ENCODE measurements at regions of chr11 and their contacts with region 1.

Region 1: DNA sequence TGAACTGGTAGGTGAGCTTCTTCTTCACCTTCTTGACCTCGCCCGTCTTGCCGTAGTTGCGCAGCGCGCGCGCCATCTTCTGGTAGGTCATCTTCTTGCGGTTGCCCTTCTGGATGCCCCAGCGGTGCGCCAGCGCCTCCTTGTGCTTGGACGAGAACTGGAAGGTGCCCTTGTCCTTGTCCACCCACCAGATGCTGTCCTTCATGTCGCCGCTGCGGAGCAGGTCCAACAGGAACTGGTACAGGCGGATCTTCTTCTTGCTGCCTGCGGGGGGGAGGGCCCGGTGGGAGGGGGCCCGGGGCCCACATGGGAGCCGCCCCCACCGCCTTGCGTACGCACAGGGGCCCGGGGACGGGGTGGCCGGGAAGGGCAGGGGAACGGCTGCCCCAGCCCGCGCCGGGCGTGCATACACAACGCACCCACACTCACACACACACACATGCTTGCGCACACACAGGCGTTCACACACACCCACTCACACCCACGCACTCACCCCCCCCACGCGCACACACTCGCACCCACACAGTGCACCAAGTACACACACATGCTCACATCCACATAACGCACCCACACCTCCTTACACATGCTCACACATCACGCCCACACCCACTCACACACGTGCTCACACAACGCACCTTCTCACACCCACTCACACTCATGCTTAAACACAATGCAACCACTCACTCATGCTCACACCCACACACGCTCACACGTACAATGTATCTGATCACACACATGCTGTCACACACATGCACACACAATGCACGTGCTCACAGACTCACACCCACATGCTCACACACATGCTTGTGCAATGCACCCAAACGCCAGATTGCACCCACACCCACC is 3.0 kb upstream of the MYBPC3 start:
- DNase-seq: peak; percentile 93
- H3K4me3 ChIP-seq: peak overlapping the region; percentile 28 to 65
- H3K27ac ChIP-seq: no peak overlapping the region
- H3K4me1 ChIP-seq: peaks cover 0 to 10% of the 10 kb centered on the region in 2 experiments; a peak in 1 of 4 replicates
- H3K27me3 ChIP-seq: no peaks in the 10 kb centered on the region
- CTCF ChIP-seq: peak; percentile 96
- EP300 ChIP-seq: no peak
- RAD21 ChIP-seq: peak; percentile 97

Region 2: GRCh38 chr11:46856605-46857343 is 498.7 kb before region 1 on chr11:
- CTCF ChIA-PET with region 1: no interaction called
- POLR2A ChIA-PET with region 1: no interaction called
- DNase-seq: no peak
- H3K4me3 ChIP-seq: no peak overlapping the region
- H3K27ac ChIP-seq: no peak overlapping the region
- H3K4me1 ChIP-seq: no peaks in the 10 kb centered on the region
- H3K27me3 ChIP-seq: no peaks in the 10 kb centered on the region
- CTCF ChIP-seq: no peak
- EP300 ChIP-seq: no peak
- RAD21 ChIP-seq: no peak

Region 3: DNA sequence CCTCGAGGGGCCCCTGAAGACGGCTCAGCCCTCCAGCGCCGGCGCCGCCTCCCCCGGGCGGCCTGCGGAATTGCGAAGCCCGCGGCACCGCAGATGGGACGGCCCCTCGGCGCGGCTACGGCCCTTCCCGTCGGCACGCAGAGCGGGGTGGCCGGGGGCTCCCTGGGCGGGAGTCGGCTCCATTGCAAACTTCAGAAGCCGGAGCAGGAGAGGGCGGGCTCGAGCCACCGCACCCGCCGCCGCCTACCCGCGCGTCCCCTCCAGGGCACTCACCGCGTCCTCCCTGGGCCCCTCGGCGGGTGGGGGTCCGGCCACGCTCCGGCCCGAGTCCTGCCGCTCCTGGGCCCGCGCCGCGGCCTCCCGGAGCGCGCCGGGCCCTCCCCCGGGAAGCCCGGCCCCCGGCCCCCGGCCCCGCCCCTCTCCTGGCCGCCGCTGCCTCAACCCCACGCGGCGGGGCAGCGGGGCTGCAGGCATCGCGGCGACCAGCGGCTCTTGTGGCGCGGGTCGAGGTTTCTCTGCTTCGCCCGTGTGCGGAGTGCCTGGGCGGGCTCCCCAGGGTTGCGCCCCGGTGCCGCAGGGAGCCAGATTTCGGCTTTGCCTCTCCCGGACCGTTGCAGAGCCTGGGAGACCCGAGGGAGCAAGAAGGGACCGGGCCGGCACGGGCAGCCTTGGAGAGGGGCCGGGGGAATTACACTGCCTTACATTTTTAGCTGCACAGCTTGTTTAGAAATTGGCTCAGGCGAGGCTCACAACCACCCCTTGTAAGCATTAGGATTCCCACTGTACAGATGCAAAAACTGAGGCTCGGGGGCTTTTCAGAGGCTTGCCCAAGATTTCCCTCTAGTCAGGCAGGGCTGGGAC is 169.2 kb before region 1 on chr11 and contains the start of gene PACSIN3:
- CTCF ChIA-PET with region 1: interaction called, 13 read pairs
- POLR2A ChIA-PET with region 1: interaction called, 4 read pairs
- DNase-seq: peak; percentile 92
- H3K4me3 ChIP-seq: peak within 1 kb of the TSS; percentile 64 to 69
- H3K27ac ChIP-seq: peak within 1 kb of the TSS in 1 of 2 experiments; percentile 94; a peak in 2 of 4 replicates
- H3K4me1 ChIP-seq: peaks cover 11 to 33% of the 10 kb centered on the region in 2 experiments; a peak in 3 of 4 replicates
- H3K27me3 ChIP-seq: no peaks in the 10 kb centered on the region
- CTCF ChIP-seq: no peak
- EP300 ChIP-seq: no peak
- RAD21 ChIP-seq: no peak
- polyA plus RNA-seq, gene PACSIN3: 24.4 and 31.1 TPM in 2 replicates

Region 4: DNA sequence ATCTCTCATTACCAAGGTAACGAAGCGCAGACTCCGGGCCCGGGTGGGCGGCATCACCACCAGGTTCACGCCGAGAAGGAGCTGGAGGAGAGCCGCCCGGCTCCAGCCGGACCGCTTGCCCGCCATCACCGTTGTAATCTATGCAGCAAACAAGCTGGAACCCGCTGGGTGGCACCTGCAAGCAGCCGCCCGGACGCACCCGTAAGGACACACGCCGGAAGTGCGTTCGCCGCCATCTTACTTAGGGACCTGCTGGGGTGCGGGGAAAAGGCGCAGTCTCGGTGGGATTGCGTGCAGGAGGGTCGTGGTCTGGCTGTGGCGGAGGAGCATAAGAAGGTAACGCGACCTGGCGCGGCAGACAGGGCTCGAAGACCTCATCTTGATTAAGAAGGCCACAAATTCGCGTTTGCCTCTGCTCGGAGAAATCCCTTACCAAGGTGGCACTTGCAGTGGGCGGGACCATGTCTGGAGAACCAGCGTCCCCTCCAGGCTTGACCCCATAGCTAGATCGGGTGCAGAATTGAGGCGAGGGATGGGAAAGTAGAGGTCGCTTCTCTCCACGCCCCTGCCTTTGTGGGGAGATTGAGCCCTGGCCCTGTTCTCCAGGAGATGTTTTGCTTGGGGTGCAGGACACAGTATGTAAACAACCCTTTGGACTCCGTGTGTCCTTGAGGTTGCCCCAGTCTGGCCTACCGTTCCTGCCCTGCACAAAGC is 106.7 kb before region 1 on chr11 and contains the start of gene ACP2:
- CTCF ChIA-PET with region 1: interaction called, 16 read pairs
- POLR2A ChIA-PET with region 1: interaction called, 3 read pairs
- DNase-seq: peak; percentile 89
- H3K4me3 ChIP-seq: peak within 1 kb of the TSS; percentile 75 to 92
- H3K27ac ChIP-seq: peak within 1 kb of the TSS; percentile 63 to 96
- H3K4me1 ChIP-seq: peaks cover 8 to 15% of the 10 kb centered on the region in 2 experiments
- H3K27me3 ChIP-seq: no peaks in the 10 kb centered on the region
- CTCF ChIP-seq: peak; percentile 49
- EP300 ChIP-seq: no peak
- RAD21 ChIP-seq: peak; percentile 10; the same call in 1 of the 2 replicates
- polyA plus RNA-seq, gene ACP2: 15.9 and 17.5 TPM in 2 replicates

Region 5: GRCh38 chr11:47269002-47269828 is 86.3 kb before region 1 on chr11:
- CTCF ChIA-PET with region 1: interaction called, 26 read pairs
- POLR2A ChIA-PET with region 1: no interaction called
- DNase-seq: peak; percentile 98
- H3K4me3 ChIP-seq: peak overlapping the region; percentile 64 to 73
- H3K27ac ChIP-seq: peak overlapping the region; percentile 85 to 96
- H3K4me1 ChIP-seq: peaks cover 34 to 47% of the 10 kb centered on the region in 2 experiments
- H3K27me3 ChIP-seq: no peaks in the 10 kb centered on the region
- CTCF ChIP-seq: no peak
- EP300 ChIP-seq: no peak; a peak in 1 of 4 replicates
- RAD21 ChIP-seq: no peak

Region 6: GRCh38 chr11:47342036-47342814 is 13.3 kb before region 1 on chr11:
- CTCF ChIA-PET with region 1: interaction called, 26 read pairs
- POLR2A ChIA-PET with region 1: no interaction called
- DNase-seq: no peak
- H3K4me3 ChIP-seq: no peak overlapping the region
- H3K27ac ChIP-seq: no peak overlapping the region
- H3K4me1 ChIP-seq: no peaks in the 10 kb centered on the region
- H3K27me3 ChIP-seq: no peaks in the 10 kb centered on the region
- CTCF ChIP-seq: no peak
- EP300 ChIP-seq: no peak
- RAD21 ChIP-seq: no peak

Region 7: DNA sequence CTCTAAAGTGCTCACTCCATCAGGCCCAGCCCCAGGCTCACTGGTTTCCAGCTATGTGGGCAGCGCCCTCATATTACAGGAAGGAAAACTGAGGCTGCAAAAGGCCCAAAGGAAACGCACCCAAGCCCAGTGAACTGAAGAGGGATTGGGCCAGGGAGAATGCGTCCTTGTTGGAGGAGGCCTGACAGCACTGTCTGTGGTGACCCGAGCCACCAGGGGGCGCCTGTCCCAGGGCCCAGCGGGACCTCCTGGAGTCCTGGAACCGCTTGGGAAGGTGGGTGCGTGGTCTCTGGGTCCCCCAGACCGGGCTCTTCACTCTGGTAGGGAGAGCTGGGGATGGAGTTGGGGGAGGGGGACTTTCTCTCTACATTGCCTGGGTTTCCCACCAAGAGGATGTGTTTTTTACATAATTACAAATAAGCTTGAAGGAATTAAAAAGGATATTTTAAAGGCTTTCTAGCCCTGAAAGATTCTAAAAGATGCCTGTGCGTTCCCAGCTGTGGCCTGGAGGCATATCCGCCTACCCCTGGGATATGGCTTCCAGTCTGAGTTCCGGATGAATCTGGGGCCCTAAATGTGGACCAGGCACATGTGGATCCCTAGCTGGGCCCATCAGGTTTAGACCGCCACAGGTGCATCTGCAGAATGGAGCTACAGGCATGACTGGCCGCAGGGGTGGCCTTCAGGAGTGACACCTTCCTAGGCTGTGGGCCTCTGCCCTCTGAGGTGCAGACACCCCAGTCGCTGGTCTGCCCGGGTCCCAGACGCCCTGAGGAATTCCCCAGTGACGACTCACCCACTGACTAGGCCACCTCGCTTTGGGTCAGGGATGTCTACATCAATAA is 18.6 kb after region 1 on chr11:
- CTCF ChIA-PET with region 1: interaction called, 24 read pairs
- POLR2A ChIA-PET with region 1: no interaction called
- DNase-seq: peak; percentile 92
- H3K4me3 ChIP-seq: no peak overlapping the region
- H3K27ac ChIP-seq: no peak overlapping the region
- H3K4me1 ChIP-seq: peaks cover 0 to 4% of the 10 kb centered on the region in 2 experiments; a peak in 1 of 4 replicates
- H3K27me3 ChIP-seq: no peaks in the 10 kb centered on the region
- CTCF ChIP-seq: peak; percentile 96
- EP300 ChIP-seq: no peak
- RAD21 ChIP-seq: peak; percentile 77